Pancreas (tissue), 10 donors: ENCODE measurements at regions of chr18 and their contacts with region 1.

Region 1: DNA sequence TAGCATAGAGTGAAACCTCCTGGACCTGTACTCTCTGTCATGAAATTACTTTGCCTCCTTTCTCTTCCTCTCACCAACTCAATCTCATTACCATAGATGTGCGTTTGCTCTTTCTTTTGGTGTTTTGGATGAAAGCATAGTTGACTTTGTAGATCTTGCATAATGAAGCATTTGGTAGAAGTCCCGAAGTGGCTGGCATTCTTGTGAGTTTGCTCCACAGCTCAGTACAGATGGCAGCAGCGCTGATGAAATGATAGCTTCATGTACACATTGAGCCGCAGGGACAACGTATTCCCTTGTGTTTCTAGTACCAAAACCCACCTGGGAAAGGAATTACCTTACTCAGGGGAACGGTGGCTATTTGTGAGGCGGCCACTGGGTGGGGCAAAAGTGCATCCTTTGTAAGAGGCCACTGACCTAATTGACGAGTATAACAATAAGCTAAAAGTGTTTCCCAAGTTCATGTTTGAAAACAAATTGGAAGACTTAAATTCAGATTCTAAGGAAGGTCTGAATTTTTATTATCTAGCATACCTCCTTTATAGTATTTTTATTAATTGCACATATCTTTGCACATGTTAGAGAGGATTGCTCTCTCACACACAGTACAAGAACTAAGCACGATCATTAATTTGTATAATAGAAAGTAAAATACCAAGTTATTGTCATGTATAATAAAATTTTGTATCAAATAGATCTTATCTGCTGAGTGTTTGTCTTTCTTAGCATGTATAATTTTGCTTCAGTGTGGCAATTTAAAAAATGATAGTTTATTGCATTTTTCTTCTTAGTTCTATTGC is 25.4 kb upstream of the CDH7 start:
- DNase-seq: peak in 4 of 6 donors; percentile 5 to 63 (median 18)
- ATAC-seq: peak in 3 of 4 donors; percentile 66 to 87 (median 79)
- H3K4me3 ChIP-seq: no peak overlapping the region
- H3K27ac ChIP-seq: no peak overlapping the region
- H3K4me1 ChIP-seq: no peaks in the 10 kb centered on the region
- H3K27me3 ChIP-seq: no peaks in the 10 kb centered on the region
- CTCF ChIP-seq: peak in 3 of 4 donors; percentile 15 to 29 (median 28)

Region 2: GRCh38 chr18:65924904-65925303 is 199.5 kb after region 1 on chr18:
- intact Hi-C with region 1: no loop called
- DNase-seq: no peak
- ATAC-seq: no peak
- H3K4me3 ChIP-seq: no peak overlapping the region
- H3K27ac ChIP-seq: no peak overlapping the region
- H3K4me1 ChIP-seq: no peaks in the 10 kb centered on the region
- H3K27me3 ChIP-seq: no peaks in the 10 kb centered on the region
- CTCF ChIP-seq: no peak

Region 3: DNA sequence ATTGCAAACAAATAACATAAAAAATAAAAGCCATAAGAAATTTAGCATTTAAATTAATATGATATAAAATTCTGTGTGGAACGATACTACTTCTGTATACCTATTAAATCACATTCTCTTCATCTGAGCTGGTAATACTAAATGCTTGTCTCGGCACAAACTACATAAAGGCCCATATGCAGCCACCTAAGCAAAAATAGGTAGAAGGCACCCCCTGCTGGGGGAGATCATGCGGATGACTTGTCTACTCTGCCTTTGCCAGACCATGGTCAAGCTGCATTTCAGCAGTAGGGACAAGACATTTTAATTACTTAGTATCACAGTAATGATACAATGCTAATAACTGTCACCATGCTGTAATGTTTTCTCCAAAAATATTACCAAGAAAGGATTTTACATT is 770.4 kb after region 1 on chr18:
- intact Hi-C with region 1: loop called in 1 of 3 experiments (anchors 10 kb)
- DNase-seq: peak in 4 of 6 donors; percentile 19 to 57 (median 42)
- ATAC-seq: peak in 3 of 4 donors; percentile 77 to 88 (median 84)
- H3K4me3 ChIP-seq: no peak overlapping the region
- H3K27ac ChIP-seq: no peak overlapping the region
- H3K4me1 ChIP-seq: no peaks in the 10 kb centered on the region
- H3K27me3 ChIP-seq: no peaks in the 10 kb centered on the region
- CTCF ChIP-seq: peak in 1 of 4 donors; percentile 14